Activated CD4-positive, alpha-beta T cell treated with anti-CD3 and anti-CD28 coated beads for 36 hours (primary cell): ENCODE measurements at regions of chr3 and their contacts with region 1.

Region 1: GRCh38 chr3:134197681-134198261 is 52.9 kb downstream of the RYK start:
- DNase-seq: no peak
- ATAC-seq: peak; percentile 93
- H3K4me3 Mint-ChIP-seq: no peak overlapping the region
- H3K27ac Mint-ChIP-seq: no peak overlapping the region
- H3K4me1 Mint-ChIP-seq: peaks cover 17% of the 10 kb centered on the region
- H3K27me3 Mint-ChIP-seq: no peaks in the 10 kb centered on the region

Region 2: DNA sequence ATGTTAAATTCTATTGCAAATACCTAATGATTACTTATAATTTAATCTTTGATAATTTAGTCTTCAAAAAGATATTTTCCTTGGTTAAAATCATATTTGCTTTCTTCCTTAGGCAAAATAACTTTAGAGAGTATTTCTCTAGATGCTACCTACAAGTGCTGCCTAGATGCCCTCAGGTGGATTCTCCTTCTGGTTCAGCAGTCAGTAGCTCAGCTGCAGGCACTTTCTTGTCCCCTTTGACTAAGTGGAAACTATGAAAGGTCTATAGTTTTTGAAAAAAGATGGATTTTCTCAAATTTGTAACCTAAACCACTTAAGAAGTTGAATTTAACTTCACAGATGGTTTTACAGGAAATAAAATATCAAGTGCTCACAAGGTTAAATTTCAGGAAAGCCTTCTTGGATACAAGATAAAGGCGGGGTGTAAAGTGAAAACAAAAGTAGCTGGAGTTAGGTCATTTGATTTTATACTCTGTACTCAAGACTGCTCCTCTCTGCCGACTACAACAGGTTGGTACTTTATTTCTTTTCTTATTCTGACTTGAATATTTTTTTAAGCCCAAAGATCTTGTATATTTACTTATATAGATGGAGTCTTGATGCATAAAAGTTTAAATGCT is 1600.8 kb before region 1 on chr3 and contains the start of gene ACKR4:
- CTCF ChIA-PET with region 1: no interaction called
- POLR2A ChIA-PET with region 1: no interaction called
- intact Hi-C with region 1: no loop called
- DNase-seq: no peak
- ATAC-seq: no peak
- H3K4me3 Mint-ChIP-seq: no peak within 1 kb of the TSS
- H3K27ac Mint-ChIP-seq: no peak within 1 kb of the TSS
- H3K4me1 Mint-ChIP-seq: no peaks in the 10 kb centered on the region
- H3K27me3 Mint-ChIP-seq: no peaks in the 10 kb centered on the region
- total RNA-seq, gene ACKR4: 0.09 TPM

Region 3: GRCh38 chr3:133812872-133813271 is 384.9 kb before region 1 on chr3:
- CTCF ChIA-PET with region 1: no interaction called
- POLR2A ChIA-PET with region 1: no interaction called
- intact Hi-C with region 1: loop called in 1 of 2 experiments (anchors 10 kb)
- DNase-seq: no peak
- ATAC-seq: no peak
- H3K4me3 Mint-ChIP-seq: no peak overlapping the region
- H3K27ac Mint-ChIP-seq: no peak overlapping the region
- H3K4me1 Mint-ChIP-seq: peaks cover 30% of the 10 kb centered on the region
- H3K27me3 Mint-ChIP-seq: no peaks in the 10 kb centered on the region

Region 4: DNA sequence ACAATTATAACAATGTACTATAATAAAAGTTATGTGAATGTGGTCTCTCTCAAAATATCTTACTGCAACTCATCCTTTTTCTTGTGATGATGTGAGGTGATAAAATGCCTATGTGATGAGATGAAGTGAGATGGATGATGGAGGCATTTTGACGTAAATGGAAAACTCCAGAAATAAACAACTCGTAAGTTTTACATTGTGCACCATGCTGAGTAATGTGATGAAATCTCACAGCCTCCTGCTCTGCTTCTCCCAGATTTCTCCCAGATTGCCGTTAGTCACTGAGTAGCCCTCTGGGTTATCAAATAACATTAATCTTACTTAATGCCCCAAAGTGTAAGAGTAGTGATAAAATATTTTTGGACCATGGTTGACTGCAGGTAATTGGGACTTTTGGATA is 103.3 kb before region 1 on chr3:
- CTCF ChIA-PET with region 1: no interaction called
- POLR2A ChIA-PET with region 1: no interaction called
- intact Hi-C with region 1: no loop called
- DNase-seq: no peak
- ATAC-seq: no peak
- H3K4me3 Mint-ChIP-seq: no peak overlapping the region
- H3K27ac Mint-ChIP-seq: no peak overlapping the region
- H3K4me1 Mint-ChIP-seq: no peaks in the 10 kb centered on the region
- H3K27me3 Mint-ChIP-seq: no peaks in the 10 kb centered on the region

Region 5: GRCh38 chr3:134180761-134181160 is 17.0 kb before region 1 on chr3:
- CTCF ChIA-PET with region 1: interaction called, 11 read pairs
- POLR2A ChIA-PET with region 1: no interaction called
- intact Hi-C with region 1: no loop called
- DNase-seq: no peak
- ATAC-seq: no peak
- H3K4me3 Mint-ChIP-seq: no peak overlapping the region
- H3K27ac Mint-ChIP-seq: no peak overlapping the region
- H3K4me1 Mint-ChIP-seq: peaks cover 3% of the 10 kb centered on the region
- H3K27me3 Mint-ChIP-seq: no peaks in the 10 kb centered on the region

Region 6: GRCh38 chr3:134371542-134372324 is 174.0 kb after region 1 on chr3:
- CTCF ChIA-PET with region 1: no interaction called
- POLR2A ChIA-PET with region 1: no interaction called
- intact Hi-C with region 1: loop called in 1 of 2 experiments (anchors 1 kb)
- DNase-seq: no peak
- ATAC-seq: no peak
- H3K4me3 Mint-ChIP-seq: no peak overlapping the region
- H3K27ac Mint-ChIP-seq: no peak overlapping the region
- H3K4me1 Mint-ChIP-seq: peaks cover 9% of the 10 kb centered on the region
- H3K27me3 Mint-ChIP-seq: peaks cover 33% of the 10 kb centered on the region